ENCODE measurements at regions of chr11 and their contacts with region 1.

Region 1: DNA sequence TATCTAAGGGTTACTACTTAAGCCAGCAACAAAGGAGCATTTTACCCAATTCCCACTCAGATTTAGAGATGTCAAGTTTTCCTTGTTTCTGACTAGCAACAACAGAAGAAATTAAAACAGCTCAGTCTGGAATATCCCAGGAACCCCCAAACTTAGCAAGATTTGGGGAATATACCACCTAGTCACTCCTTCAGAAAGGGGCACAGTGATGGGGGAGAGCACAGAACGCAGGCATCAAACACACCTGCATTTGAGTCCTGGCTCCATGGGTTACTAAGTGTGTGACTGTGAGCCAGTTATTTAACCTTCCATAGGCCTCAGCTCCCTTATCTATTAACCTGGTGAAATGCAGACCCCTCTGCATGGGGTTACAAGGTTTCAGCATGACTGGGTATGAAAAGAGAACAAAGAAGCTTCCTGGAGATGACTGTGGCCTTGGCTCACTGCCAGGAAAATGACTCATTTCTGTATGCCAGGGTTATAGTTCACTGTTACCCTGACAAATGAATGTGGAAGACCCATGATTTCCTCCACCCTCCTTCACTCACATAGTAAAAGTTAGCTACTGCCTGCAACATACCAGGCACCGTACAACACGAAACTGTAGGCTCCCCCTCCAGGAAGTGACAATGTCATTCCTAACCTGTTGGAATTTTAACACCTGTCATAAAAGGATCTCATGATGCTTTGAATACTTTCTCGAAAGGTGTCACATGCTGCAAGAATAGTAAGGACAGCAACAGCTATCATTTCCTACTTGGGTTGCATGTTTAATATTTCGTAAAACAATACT is 79.6 kb downstream of the ME3 start:
- DNase-seq: peak in 1 of 2 donors; percentile 58
- ATAC-seq: peak in 7 of 8 donors; percentile 11 to 76 (median 50)
- H3K4me3 ChIP-seq: no peak overlapping the region
- H3K27ac ChIP-seq: peak overlapping the region in 1 of 10 donors; percentile 17
- H3K4me1 ChIP-seq: peaks cover 9 to 64% (median 38%) of the 10 kb centered on the region in 9 donors
- H3K27me3 ChIP-seq: no peaks in the 10 kb centered on the region
- CTCF ChIP-seq: no peak

Region 2: DNA sequence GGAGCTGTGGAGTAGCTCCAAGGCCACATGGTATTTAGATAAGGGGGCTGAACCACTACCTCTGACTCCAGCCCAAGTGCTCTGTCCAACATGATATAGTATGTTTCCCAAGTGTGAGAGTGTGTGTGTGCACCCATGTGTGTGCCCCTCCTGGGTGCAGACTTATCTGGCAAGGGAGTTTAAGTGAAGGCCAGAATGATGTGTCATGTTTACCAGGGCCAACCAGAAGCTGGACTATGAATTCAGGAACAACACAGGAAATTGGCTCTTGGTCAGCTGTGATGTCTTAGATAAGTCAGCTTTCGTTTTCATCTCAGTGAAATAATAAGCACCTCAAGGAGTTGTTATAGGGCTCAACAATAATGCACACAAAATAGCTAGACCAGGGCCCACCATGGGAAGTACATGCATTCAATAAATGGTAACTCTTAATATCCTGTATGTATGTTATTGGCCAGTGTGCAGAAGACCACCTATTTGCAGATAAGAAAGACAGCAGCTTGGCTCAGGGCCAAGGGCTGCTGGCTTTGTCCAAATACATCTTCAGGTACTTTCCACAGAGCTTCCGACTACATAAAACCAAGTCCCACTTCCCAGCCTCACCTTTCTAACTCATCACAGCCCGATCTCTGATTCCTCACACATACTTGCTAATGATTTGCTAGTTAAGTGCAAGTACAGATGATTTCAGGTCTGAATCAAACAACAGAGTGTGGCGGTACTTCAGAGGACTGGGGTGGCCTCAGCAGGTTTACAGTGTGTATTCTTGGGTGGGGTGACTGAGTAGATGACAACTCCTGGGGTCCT is 41.4 kb before region 1 on chr11:
- intact Hi-C with region 1: loop called in 1 of 10 experiments (anchors 5 kb)
- DNase-seq: peak in 1 of 2 donors; percentile 40
- ATAC-seq: peak in 7 of 8 donors; percentile 34 to 71 (median 66)
- H3K4me3 ChIP-seq: no peak overlapping the region
- H3K27ac ChIP-seq: peak overlapping the region; percentile 26 to 84 (median 70)
- H3K4me1 ChIP-seq: peaks cover 7 to 61% (median 33%) of the 10 kb centered on the region in 9 donors
- H3K27me3 ChIP-seq: no peaks in the 10 kb centered on the region
- CTCF ChIP-seq: no peak

Measured in heart right ventricle (tissue), 16 donors.